ENCODE measurements at regions of chr3 and their contacts with region 1.

Region 1: DNA sequence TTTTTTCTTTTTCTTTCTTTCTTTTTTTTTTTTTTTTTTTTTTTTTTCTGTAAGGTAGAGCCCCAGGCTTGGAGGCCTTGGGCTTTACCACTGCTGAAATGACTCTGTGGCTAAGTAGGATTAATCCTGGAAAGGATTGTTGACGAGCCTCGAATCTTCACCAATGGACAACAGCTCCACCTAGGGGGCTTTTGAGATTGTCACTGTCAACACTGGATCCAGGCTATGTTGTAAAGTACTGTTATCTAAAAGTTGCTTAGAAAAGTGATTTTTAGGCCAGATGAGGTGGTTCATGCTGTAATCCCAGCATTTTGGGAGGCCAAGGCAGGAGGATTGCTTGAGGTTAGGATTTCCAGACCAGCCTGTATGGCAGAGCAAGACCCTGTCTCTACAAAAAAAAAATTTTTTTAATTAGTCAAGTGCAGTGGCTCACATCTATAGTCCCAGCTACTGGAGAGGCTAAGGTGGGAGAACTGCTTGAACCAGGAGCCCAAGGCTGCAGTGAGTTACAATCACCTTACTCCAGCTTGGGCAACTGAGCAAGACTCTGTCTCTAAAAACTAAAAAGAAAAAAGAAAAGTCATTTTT is 41.6 kb downstream of the KLHL18 start:
- DNase-seq: peak; percentile 82 to 91 (median 89)
- H3K4me3 ChIP-seq: no peak overlapping the region
- H3K27ac ChIP-seq: no peak overlapping the region
- H3K4me1 ChIP-seq: peaks cover 0 to 5% (median 0%) of the 10 kb centered on the region in 4 experiments
- H3K27me3 ChIP-seq: no peaks in the 10 kb centered on the region

Region 2: GRCh38 chr3:47291158-47291753 is 33.1 kb before region 1 on chr3:
- CTCF ChIA-PET with region 1: interaction called, 10 read pairs
- POLR2A ChIA-PET with region 1: no interaction called
- DNase-seq: no peak
- H3K4me3 ChIP-seq: no peak overlapping the region
- H3K27ac ChIP-seq: no peak overlapping the region
- H3K4me1 ChIP-seq: peaks cover 0 to 8% (median under 1%) of the 10 kb centered on the region in 4 experiments
- H3K27me3 ChIP-seq: no peaks in the 10 kb centered on the region

Region 3: GRCh38 chr3:47313341-47314055 is 10.9 kb before region 1 on chr3:
- CTCF ChIA-PET with region 1: interaction called, 18 read pairs
- POLR2A ChIA-PET with region 1: no interaction called
- DNase-seq: no peak
- H3K4me3 ChIP-seq: no peak overlapping the region
- H3K27ac ChIP-seq: peak overlapping the region in 1 of 2 experiments; percentile 17
- H3K4me1 ChIP-seq: peaks cover 0 to 11% (median 6%) of the 10 kb centered on the region in 4 experiments
- H3K27me3 ChIP-seq: no peaks in the 10 kb centered on the region

Region 4: DNA sequence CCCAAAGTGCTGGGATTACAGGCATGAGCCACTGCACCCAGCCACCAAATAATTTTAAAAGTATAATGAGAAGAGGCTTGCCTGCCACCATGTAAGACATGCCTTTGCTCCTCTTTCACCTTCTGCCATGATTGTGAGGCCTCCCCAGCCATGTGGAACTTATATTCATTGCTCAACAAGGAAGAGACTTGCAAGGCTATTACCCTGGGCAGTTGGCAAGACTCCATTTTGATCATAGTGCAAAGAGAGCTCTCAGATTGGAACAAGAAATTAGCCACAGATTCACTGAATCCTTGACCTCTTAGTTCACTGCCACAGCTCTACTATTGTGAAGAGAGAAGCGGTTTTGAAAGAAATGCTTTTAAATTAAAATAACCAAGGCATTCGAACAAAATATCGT is 145.2 kb after region 1 on chr3:
- CTCF ChIA-PET with region 1: no interaction called
- POLR2A ChIA-PET with region 1: no interaction called
- DNase-seq: no peak
- H3K4me3 ChIP-seq: no peak overlapping the region
- H3K27ac ChIP-seq: no peak overlapping the region
- H3K4me1 ChIP-seq: peaks cover 0 to 12% (median 6%) of the 10 kb centered on the region in 4 experiments
- H3K27me3 ChIP-seq: no peaks in the 10 kb centered on the region